A549 (cell line): ENCODE measurements at regions of chr9 and their contacts with region 1.

Region 1: DNA sequence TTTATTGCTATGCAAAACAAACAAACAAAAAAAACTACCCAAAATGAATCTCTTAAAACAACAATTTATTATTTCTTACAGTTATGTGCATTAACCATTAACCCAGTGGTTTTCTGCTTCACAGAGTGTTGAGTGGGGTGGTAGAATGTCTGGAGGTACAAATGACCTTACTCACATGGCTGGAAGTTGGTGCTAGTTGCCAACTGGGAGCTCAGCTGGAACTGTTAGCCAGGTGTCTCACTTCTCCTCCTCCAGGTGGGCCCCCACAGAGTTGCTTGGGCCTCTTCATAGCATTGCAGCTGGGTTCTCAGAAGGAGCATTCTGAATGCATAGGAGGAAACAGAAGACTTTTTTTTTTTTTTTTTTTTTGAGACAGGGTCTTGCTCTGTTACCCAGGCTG is 10.5 kb upstream of the B4GALT1 start:
- DNase-seq: no peak
- ATAC-seq: no peak
- H3K4me3 ChIP-seq: no peak overlapping the region
- H3K27ac ChIP-seq: no peak overlapping the region
- H3K4me1 ChIP-seq: peaks cover 10% of the 10 kb centered on the region
- CTCF ChIP-seq: no peak
- EP300 ChIP-seq: no peak
- POLR2A ChIP-seq: no peak
- RAD21 ChIP-seq: no peak

Region 2: DNA sequence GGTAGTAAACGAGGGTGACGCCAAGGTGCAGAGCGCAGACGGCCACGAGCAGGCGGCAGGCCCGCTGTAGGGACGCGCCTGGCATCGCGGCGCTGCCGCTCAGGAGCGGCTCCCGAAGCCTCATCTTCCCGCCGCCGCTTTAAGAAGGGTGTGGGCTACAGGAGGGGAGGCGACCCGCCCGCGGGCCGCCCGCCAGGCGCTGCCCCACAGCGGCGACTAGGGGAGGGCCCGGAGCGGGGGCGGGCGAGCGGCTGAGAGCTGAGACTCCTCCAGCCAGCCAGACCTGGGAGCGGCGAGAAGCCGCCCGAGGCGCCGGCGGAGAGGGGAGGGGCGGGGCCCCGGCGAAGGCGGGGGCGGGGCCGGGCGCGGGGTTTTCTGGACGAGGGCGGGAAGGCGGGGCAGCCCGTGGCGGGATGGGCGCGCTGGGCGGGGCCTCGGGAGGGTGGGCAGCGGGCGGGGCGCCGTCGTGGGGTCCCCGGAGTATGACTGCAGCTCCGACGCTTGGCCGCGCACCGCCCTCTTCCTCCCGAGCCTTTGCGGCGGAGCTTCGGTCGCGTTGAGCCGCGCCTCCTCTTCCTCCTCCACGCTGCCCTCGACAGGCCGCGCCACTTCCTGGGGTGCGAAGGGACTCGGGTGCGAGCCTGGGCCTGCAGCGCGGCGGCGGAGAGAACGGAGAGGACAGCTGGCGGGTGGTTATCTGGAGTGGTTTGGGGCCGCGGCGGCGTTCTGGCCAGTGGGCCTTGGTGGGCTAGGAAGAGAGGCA is 10.4 kb before region 1 on chr9 and contains the start of gene B4GALT1:
- CTCF ChIA-PET with region 1: interaction called, 32 read pairs
- POLR2A ChIA-PET with region 1: interaction called, 6 read pairs
- DNase-seq: peak; percentile 86 to 87
- ATAC-seq: peak; percentile 65 to 75
- H3K4me3 ChIP-seq: peak within 1 kb of the TSS; percentile 86
- H3K27ac ChIP-seq: peak within 1 kb of the TSS; percentile 95 to 97
- H3K4me1 ChIP-seq: peaks cover 48% of the 10 kb centered on the region
- CTCF ChIP-seq: no peak; the same call in 2 of the 3 replicates
- EP300 ChIP-seq: no peak; a peak in 1 of 5 replicates
- POLR2A ChIP-seq: peak; percentile 99
- RAD21 ChIP-seq: peak in 1 of 2 experiments; percentile 37; a peak in 1 of 5 replicates
- polyA plus RNA-seq, gene B4GALT1: 180 and 191 TPM in 2 replicates

Region 3: DNA sequence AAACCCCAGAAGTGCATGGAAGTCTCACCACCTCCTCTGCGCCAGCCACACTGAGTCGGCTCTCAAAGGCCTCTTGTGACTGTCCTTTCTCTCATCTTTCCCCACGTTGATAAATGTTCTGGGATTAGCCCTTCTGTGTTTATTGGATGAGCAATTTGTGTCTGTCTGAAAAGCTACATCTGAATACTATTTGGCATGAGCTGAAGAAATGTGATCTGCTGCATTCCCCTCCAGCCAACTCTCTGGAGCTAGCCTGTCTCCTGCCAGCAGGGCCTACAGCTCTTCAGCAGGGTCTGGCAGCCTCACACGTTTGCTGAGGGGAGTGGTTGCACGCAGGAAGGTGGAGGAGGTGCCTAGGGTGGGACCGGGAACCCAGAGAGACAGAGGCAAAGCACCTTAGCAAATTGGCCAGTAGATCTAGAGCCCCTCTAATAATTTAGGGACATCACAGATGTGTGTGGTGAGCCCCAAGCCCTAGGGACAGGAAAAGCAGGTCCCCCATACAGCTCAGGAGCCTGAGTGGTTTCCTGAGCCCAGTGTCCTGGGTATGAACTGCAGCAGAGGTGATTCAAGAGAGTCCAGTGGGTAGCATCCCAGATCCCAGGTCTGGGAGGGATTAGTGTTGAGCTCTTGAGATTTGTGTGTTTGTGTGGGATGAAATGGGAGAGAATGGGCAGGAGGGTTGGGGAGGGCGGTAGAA is 10.0 kb after region 1 on chr9:
- CTCF ChIA-PET with region 1: interaction called, 12 read pairs
- POLR2A ChIA-PET with region 1: no interaction called
- DNase-seq: no peak
- ATAC-seq: peak; percentile 36 to 38; a peak in 4 of 6 replicates
- H3K4me3 ChIP-seq: no peak overlapping the region
- H3K27ac ChIP-seq: peak overlapping the region in 1 of 2 experiments; percentile 5; a peak in 2 of 6 replicates
- H3K4me1 ChIP-seq: peaks cover 14% of the 10 kb centered on the region
- CTCF ChIP-seq: no peak
- EP300 ChIP-seq: no peak
- POLR2A ChIP-seq: no peak
- RAD21 ChIP-seq: no peak